Right lobe of liver (tissue), 6 donors: ENCODE measurements at regions of chr2 and their contacts with region 1.

Region 1: DNA sequence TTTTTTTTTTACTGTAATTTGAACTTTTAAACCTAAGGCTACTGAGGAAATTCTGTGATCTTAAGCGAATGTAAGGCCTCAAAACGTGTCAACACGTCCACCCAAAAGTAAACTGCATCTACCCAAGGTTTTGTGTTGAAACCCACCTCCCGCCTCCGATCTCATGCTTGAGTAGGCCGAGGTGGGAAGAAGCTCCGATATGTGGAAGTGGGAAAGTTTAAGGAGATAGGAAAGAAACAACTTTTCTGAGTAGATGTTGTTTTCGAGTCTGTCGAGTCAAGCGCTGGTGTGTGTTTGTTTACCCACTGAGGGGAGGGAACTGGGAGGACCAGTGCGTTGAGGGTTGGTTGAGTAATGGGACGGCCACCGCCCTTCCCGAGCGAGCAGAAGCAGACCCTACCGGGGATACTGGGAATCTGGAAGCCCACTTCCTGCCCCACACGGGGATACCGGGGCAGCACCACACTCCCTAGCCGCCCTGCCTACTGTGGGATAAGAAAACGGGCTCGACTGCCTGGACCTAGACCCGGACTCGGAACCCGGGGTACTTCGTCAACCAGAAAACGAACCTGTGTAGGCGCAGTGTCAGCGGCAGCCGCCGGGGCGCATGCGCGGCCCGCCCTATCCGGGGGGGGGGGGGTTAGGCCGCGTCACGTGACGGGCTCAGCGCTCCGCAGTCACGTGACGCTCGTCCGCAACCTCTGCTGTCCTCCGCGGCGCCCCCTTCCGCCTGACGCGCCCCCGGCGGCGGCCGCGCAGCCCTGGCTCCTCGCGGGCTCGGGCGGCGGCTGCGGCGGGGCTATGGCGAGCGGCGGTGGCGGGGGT is at the start of gene RETREG2:
- DNase-seq: peak; percentile 89 to 92 (median 90)
- ATAC-seq: peak; percentile 81 to 86 (median 84)
- H3K4me3 ChIP-seq: peak within 1 kb of the TSS; percentile 86 to 98 (median 92)
- H3K27ac ChIP-seq: peak within 1 kb of the TSS; percentile 99 to 100 (median 99)
- H3K4me1 ChIP-seq: peaks cover 0 to 24% (median 4%) of the 10 kb centered on the region in 4 donors
- H3K27me3 ChIP-seq: no peaks in the 10 kb centered on the region
- CTCF ChIP-seq: peak in 3 of 4 donors; percentile 35 to 50 (median 46)
- POLR2A ChIP-seq: peak; percentile 97
- total RNA-seq, gene RETREG2: 33.6 to 77.9 (median 51.0) TPM

Region 2: DNA sequence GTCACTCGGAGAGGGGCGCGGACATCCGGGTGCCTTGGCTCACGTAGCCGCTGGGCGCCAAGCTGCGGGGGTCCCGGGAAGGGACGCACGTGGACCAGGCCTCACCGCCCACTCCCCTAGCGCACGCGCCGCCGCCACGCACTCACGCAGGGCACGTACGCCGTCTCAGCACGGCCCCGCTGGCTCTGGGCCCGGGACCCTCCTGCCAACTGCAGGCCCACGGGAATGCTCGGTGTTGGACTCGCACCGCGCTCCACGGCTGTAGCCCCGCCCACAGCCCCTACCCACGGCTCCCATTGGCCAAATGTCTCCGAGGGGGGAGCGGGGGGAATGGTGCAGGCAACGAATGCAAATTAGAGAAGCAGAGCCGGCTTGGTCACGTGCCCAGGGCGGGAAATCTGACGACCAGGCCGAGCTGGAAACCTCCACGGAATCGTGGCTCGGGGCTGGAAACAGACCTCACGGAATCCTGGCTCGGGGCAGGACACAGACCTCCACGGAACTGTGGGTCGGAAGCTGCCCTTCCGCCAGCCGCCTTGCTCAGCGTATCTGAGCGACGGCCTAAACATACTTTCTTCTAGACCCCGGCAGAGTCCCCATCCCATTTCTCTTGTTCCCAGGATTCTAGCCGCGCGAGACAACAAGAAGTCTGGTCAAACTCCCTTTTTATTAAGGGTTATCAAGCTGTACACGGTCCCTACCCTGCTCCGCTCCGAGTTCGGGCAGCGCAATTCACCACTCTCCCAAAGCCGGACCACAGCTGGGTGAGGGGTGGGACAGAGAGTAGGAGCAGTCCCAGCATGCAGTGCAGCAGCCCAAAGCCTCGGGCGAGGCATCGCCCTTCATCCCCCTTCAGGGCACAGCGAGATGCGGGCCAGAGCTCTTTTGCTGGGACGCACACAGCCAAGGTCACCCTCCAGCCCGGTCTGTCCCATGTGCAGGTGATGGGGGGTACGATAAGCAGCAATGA is 41.3 kb after region 1 on chr2 and contains the start of gene ABCB6:
- intact Hi-C with region 1: loop called in 1 of 2 experiments (anchors 5 kb)
- DNase-seq: peak; percentile 96 to 99 (median 98)
- ATAC-seq: peak; percentile 88 to 94 (median 92)
- H3K4me3 ChIP-seq: peak within 1 kb of the TSS; percentile 54 to 72 (median 59)
- H3K27ac ChIP-seq: peak within 1 kb of the TSS; percentile 68 to 85 (median 76)
- H3K4me1 ChIP-seq: peaks cover 0 to 23% (median 11%) of the 10 kb centered on the region in 4 donors
- H3K27me3 ChIP-seq: no peaks in the 10 kb centered on the region
- CTCF ChIP-seq: no peak
- POLR2A ChIP-seq: peak; percentile 63
- total RNA-seq, gene ABCB6: 20.3 to 72.5 (median 37.3) TPM

Region 3: DNA sequence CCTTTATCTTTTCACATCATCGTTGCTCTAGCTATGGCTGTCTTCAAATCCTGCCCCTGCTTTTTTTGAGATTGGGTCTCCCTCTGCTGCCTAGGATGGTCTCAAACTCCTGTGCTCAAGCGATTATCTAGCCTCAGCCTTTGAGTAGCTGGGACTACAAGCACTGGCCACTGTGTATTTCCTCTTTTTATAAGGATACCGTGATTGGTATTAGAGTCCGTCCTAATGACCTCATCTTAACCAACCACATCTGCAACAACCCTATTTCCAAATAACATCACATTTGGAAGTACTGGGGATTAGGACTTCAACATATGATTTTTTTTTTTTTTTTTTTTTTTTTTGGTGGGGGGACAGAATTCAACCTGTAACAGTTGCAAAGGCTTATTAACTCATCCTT is 145.7 kb after region 1 on chr2:
- intact Hi-C with region 1: no loop called
- DNase-seq: no peak
- ATAC-seq: no peak
- H3K4me3 ChIP-seq: no peak overlapping the region
- H3K27ac ChIP-seq: no peak overlapping the region
- H3K4me1 ChIP-seq: no peaks in the 10 kb centered on the region
- H3K27me3 ChIP-seq: no peaks in the 10 kb centered on the region
- CTCF ChIP-seq: no peak
- POLR2A ChIP-seq: no peak

Region 4: GRCh38 chr2:219543601-219544358 is 366.0 kb after region 1 on chr2 and contains the starts of genes CHPF and TMEM198:
- intact Hi-C with region 1: no loop called
- DNase-seq: peak; percentile 98 to 99 (median 99)
- ATAC-seq: peak; percentile 92 to 95 (median 93)
- H3K4me3 ChIP-seq: peak within 1 kb of the TSS; percentile 72 to 89 (median 78)
- H3K27ac ChIP-seq: peak within 1 kb of the TSS; percentile 50 to 88 (median 79)
- H3K4me1 ChIP-seq: peaks cover 0 to 18% (median 5%) of the 10 kb centered on the region in 4 donors
- H3K27me3 ChIP-seq: no peaks in the 10 kb centered on the region
- CTCF ChIP-seq: no peak
- POLR2A ChIP-seq: peak; percentile 72
- total RNA-seq, gene CHPF: 33.2 to 183 (median 39.6) TPM
- total RNA-seq, gene TMEM198: 0.68 to 3.2 (median 1.2) TPM